CD8-positive, alpha-beta T cell (primary cell): ENCODE measurements at regions of chr5 and their contacts with region 1.

Region 1: GRCh38 chr5:91383027-91383955 is at the start of gene ARRDC3:
- DNase-seq: peak; percentile 94 to 99 (median 97)
- ATAC-seq: peak; percentile 30
- H3K4me3 ChIP-seq: peak within 1 kb of the TSS; percentile 73 to 99
- H3K4me3 Mint-ChIP-seq: peak within 1 kb of the TSS; percentile 98
- H3K27ac ChIP-seq: peak within 1 kb of the TSS; percentile 96 to 100
- H3K27ac Mint-ChIP-seq: peak within 1 kb of the TSS; percentile 100
- H3K4me1 ChIP-seq: peaks cover 17% of the 10 kb centered on the region
- H3K4me1 Mint-ChIP-seq: peaks cover 26% of the 10 kb centered on the region
- H3K27me3 ChIP-seq: no peaks in the 10 kb centered on the region
- H3K27me3 Mint-ChIP-seq: no peaks in the 10 kb centered on the region
- CTCF ChIP-seq: no peak
- total RNA-seq, gene ARRDC3: 131 to 132 TPM

Region 2: GRCh38 chr5:90529194-90529938 is 853.9 kb before region 1 on chr5 and contains the start of gene LYSMD3:
- CTCF ChIA-PET with region 1: no interaction called
- POLR2A ChIA-PET with region 1: interaction called, 4 read pairs
- intact Hi-C with region 1: loop called in 1 of 2 experiments (anchors 2 kb)
- DNase-seq: peak; percentile 94 to 99 (median 98)
- ATAC-seq: peak; percentile 91
- H3K4me3 ChIP-seq: peak within 1 kb of the TSS; percentile 90 to 98
- H3K4me3 Mint-ChIP-seq: peak within 1 kb of the TSS; percentile 99
- H3K27ac ChIP-seq: peak within 1 kb of the TSS; percentile 95 to 98
- H3K27ac Mint-ChIP-seq: peak within 1 kb of the TSS; percentile 99
- H3K4me1 ChIP-seq: peaks cover 27% of the 10 kb centered on the region
- H3K4me1 Mint-ChIP-seq: peaks cover 37% of the 10 kb centered on the region
- H3K27me3 ChIP-seq: no peaks in the 10 kb centered on the region
- H3K27me3 Mint-ChIP-seq: peaks cover 11% of the 10 kb centered on the region
- CTCF ChIP-seq: no peak
- total RNA-seq, gene LYSMD3: 25.8 to 30.9 TPM

Region 3: DNA sequence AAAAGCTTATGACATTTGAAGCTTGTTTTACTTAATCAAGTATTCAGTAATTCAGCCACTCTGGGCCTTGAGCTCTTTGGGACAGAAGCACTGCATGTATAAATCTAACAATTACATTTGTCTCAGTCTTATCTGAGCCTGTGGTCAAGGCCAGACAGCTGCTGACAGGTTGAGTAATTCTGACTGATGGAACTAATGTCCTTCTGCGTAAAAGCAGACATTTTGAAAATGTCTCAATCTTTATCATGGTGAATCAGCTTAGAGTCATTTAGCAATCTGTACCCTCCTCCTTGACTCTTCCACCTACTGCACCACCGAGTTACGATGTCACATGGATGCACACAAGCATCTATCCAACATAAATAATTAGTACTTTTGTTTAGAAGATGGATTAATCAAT is 400.1 kb before region 1 on chr5:
- CTCF ChIA-PET with region 1: no interaction called
- POLR2A ChIA-PET with region 1: no interaction called
- intact Hi-C with region 1: no loop called
- DNase-seq: no peak
- ATAC-seq: no peak
- H3K4me3 ChIP-seq: no peak overlapping the region
- H3K4me3 Mint-ChIP-seq: no peak overlapping the region
- H3K27ac ChIP-seq: no peak overlapping the region
- H3K27ac Mint-ChIP-seq: no peak overlapping the region
- H3K4me1 ChIP-seq: no peaks in the 10 kb centered on the region
- H3K4me1 Mint-ChIP-seq: no peaks in the 10 kb centered on the region
- H3K27me3 ChIP-seq: no peaks in the 10 kb centered on the region
- H3K27me3 Mint-ChIP-seq: no peaks in the 10 kb centered on the region
- CTCF ChIP-seq: no peak

Region 4: DNA sequence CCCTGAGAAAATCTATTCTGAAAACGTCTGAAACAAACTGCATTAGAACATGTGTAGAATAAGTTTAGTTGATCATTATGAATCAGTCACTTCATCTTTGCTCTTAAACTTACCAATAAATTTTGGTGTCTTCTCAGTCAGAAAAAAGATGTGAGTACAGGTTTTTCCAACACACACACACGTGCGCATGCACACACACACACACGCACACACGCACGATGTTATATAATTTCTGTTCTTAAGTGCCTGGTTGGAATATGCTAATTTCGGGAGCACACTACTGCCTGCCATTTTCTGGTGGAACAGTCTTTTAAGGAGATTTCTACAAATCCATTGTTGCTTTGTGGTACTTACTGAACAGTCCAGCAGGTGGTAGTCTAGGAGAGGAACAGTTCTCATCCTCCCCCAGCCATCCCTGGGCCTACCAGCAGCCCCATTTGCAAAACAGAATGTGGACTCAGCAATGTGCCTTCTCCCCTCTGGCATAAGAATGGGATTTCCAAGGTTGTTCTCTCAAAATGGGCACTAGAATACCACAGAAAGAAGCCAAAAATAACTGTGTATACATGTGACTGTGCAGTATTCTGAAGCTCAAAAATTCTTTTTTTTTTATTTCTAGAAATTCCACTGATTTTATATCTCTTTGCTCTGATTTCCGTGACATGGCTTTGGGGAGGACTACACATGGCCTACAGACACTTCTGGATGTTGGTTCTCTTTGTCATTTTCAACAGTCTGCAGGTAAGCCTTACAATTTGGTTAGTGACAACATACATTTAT is 281.5 kb before region 1 on chr5:
- CTCF ChIA-PET with region 1: interaction called, 17 read pairs
- POLR2A ChIA-PET with region 1: interaction called, 3 read pairs
- intact Hi-C with region 1: loop called in 1 of 2 experiments (anchors 1 kb)
- DNase-seq: peak in 8 of 9 experiments; percentile 14 to 71 (median 46)
- ATAC-seq: peak; percentile 84
- H3K4me3 ChIP-seq: no peak overlapping the region
- H3K4me3 Mint-ChIP-seq: no peak overlapping the region
- H3K27ac ChIP-seq: no peak overlapping the region
- H3K27ac Mint-ChIP-seq: no peak overlapping the region
- H3K4me1 ChIP-seq: no peaks in the 10 kb centered on the region
- H3K4me1 Mint-ChIP-seq: no peaks in the 10 kb centered on the region
- H3K27me3 ChIP-seq: no peaks in the 10 kb centered on the region
- H3K27me3 Mint-ChIP-seq: no peaks in the 10 kb centered on the region
- CTCF ChIP-seq: no peak

Region 5: GRCh38 chr5:91235271-91235694 is 148.0 kb before region 1 on chr5:
- CTCF ChIA-PET with region 1: interaction called, 33 read pairs
- POLR2A ChIA-PET with region 1: interaction called, 7 read pairs
- intact Hi-C with region 1: no loop called
- DNase-seq: no peak
- ATAC-seq: no peak
- H3K4me3 ChIP-seq: no peak overlapping the region
- H3K4me3 Mint-ChIP-seq: no peak overlapping the region
- H3K27ac ChIP-seq: no peak overlapping the region
- H3K27ac Mint-ChIP-seq: no peak overlapping the region
- H3K4me1 ChIP-seq: no peaks in the 10 kb centered on the region
- H3K4me1 Mint-ChIP-seq: no peaks in the 10 kb centered on the region
- H3K27me3 ChIP-seq: no peaks in the 10 kb centered on the region
- H3K27me3 Mint-ChIP-seq: no peaks in the 10 kb centered on the region
- CTCF ChIP-seq: no peak

Region 6: GRCh38 chr5:91366571-91366970 is 16.7 kb before region 1 on chr5:
- CTCF ChIA-PET with region 1: interaction called, 10 read pairs
- POLR2A ChIA-PET with region 1: interaction called, 57 read pairs
- intact Hi-C with region 1: no loop called
- DNase-seq: no peak
- ATAC-seq: no peak
- H3K4me3 ChIP-seq: no peak overlapping the region
- H3K4me3 Mint-ChIP-seq: no peak overlapping the region
- H3K27ac ChIP-seq: no peak overlapping the region
- H3K27ac Mint-ChIP-seq: no peak overlapping the region
- H3K4me1 ChIP-seq: peaks cover 8% of the 10 kb centered on the region
- H3K4me1 Mint-ChIP-seq: peaks cover 27% of the 10 kb centered on the region
- H3K27me3 ChIP-seq: no peaks in the 10 kb centered on the region
- H3K27me3 Mint-ChIP-seq: no peaks in the 10 kb centered on the region
- CTCF ChIP-seq: no peak